ENCODE measurements at regions of chr3 and their contacts with region 1.

Region 1: GRCh38 chr3:184360070-184360928 is 1.1 kb downstream of the CLCN2 start:
- DNase-seq: no peak
- H3K4me3 ChIP-seq: peak overlapping the region; percentile 77
- H3K27me3 ChIP-seq: no peaks in the 10 kb centered on the region
- CTCF ChIP-seq: no peak

Region 2: DNA sequence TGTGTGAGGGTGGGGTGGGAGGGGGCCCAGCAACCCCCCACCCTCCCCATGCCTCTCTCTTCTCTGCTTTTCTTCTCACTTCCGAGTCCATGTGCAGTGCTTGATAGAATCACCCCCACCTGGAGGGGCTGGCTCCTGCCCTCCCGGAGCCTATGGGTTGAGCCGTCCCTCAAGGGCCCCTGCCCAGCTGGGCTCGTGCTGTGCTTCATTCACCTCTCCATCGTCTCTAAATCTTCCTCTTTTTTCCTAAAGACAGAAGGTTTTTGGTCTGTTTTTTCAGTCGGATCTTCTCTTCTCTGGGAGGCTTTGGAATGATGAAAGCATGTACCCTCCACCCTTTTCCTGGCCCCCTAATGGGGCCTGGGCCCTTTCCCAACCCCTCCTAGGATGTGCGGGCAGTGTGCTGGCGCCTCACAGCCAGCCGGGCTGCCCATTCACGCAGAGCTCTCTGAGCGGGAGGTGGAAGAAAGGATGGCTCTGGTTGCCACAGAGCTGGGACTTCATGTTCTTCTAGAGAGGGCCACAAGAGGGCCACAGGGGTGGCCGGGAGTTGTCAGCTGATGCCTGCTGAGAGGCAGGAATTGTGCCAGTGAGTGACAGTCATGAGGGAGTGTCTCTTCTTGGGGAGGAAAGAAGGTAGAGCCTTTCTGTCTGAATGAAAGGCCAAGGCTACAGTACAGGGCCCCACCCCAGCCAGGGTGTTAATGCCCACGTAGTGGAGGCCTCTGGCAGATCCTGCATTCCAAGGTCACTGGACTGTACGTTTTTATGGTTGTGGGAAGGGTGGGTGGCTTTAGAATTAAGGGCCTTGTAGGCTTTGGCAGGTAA is 14.8 kb before region 1 on chr3:
- CTCF ChIA-PET with region 1: interaction called, 65 read pairs
- POLR2A ChIA-PET with region 1: interaction called, 20 read pairs
- DNase-seq: no peak
- H3K4me3 ChIP-seq: no peak overlapping the region
- H3K27me3 ChIP-seq: no peaks in the 10 kb centered on the region
- CTCF ChIP-seq: peak; percentile 64